ENCODE measurements at regions of chr10 and their contacts with region 1.

Region 1: GRCh38 chr10:103966671-103967447 is at the start of gene SLK:
- DNase-seq: peak; percentile 53
- ATAC-seq: peak; percentile 87
- H3K4me3 ChIP-seq: peak within 1 kb of the TSS; percentile 83 to 93 (median 88)
- H3K27ac ChIP-seq: peak within 1 kb of the TSS; percentile 85
- H3K4me1 ChIP-seq: peaks cover 35% of the 10 kb centered on the region
- H3K27me3 ChIP-seq: peaks cover 0 to 3% of the 10 kb centered on the region in 2 experiments; a peak in 1 of 5 replicates
- CTCF ChIP-seq: no peak
- EP300 ChIP-seq: no peak
- POLR2A ChIP-seq: peak; percentile 44 to 85; a peak in 3 of 4 replicates
- RAD21 ChIP-seq: no peak; the same call in 1 of the 2 replicates
- total RNA-seq, gene SLK: 22.8 and 35.0 TPM in 2 replicates

Region 2: DNA sequence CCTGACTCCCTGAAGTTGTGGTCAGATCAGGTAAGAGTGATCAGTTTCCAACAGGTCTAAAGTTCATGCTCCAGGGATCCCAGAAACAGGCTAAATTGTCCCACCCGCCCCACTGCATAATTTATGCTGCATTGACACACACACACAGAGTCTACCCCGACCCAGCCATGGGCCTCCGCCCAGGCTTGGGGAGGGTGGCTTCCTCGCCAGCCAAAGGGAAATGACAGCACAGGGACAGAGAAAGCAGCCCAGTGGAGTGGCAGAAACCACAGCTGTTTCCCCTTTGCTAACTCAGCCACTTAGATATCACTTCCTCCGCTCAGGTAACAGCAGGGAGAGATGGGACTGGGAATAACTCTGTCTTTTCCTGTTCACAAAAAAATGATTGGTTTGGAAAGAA is 120.9 kb before region 1 on chr10:
- CTCF ChIA-PET with region 1: no interaction called
- POLR2A ChIA-PET with region 1: no interaction called
- in situ Hi-C with region 1: no loop called
- intact Hi-C with region 1: no loop called
- DNase-seq: no peak
- ATAC-seq: peak; percentile 13; the same call in 1 of the 3 replicates
- H3K4me3 ChIP-seq: no peak overlapping the region
- H3K27ac ChIP-seq: no peak overlapping the region
- H3K4me1 ChIP-seq: peaks cover 90% of the 10 kb centered on the region
- H3K27me3 ChIP-seq: no peaks in the 10 kb centered on the region
- CTCF ChIP-seq: no peak
- EP300 ChIP-seq: no peak
- POLR2A ChIP-seq: no peak
- RAD21 ChIP-seq: no peak

Region 3: DNA sequence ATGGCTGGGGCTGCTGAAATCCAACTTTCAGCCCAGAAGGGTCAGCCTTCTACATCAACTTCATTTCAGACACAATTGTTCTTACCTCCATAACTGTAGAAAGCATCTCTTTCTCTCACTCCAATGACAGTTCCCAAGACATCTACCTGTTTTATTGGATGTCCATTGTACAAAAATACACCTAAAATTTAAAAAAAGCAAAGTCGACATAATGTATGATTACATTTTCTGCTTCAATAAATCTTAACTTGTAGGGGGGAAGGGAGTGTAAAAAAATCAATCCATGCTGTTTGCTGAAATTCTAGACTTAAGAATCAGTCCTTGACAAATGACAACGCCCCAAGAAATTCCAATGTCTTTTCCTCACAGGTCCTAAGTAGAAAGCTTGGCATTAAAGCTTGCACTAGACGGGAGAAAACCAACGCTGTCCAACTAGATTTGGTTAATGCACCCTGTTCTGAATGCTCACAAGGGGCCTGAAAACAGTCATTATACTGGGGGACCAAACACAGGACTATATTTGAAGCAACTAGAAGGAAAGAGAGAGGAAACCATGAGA is 56.3 kb before region 1 on chr10:
- CTCF ChIA-PET with region 1: no interaction called
- POLR2A ChIA-PET with region 1: interaction called, 3 read pairs
- in situ Hi-C with region 1: no loop called
- intact Hi-C with region 1: loop called (anchors 1 kb)
- DNase-seq: no peak
- ATAC-seq: no peak
- H3K4me3 ChIP-seq: no peak overlapping the region
- H3K27ac ChIP-seq: no peak overlapping the region
- H3K4me1 ChIP-seq: peaks cover 17% of the 10 kb centered on the region
- H3K27me3 ChIP-seq: no peaks in the 10 kb centered on the region
- CTCF ChIP-seq: no peak
- EP300 ChIP-seq: no peak
- POLR2A ChIP-seq: no peak
- RAD21 ChIP-seq: no peak

Region 4: DNA sequence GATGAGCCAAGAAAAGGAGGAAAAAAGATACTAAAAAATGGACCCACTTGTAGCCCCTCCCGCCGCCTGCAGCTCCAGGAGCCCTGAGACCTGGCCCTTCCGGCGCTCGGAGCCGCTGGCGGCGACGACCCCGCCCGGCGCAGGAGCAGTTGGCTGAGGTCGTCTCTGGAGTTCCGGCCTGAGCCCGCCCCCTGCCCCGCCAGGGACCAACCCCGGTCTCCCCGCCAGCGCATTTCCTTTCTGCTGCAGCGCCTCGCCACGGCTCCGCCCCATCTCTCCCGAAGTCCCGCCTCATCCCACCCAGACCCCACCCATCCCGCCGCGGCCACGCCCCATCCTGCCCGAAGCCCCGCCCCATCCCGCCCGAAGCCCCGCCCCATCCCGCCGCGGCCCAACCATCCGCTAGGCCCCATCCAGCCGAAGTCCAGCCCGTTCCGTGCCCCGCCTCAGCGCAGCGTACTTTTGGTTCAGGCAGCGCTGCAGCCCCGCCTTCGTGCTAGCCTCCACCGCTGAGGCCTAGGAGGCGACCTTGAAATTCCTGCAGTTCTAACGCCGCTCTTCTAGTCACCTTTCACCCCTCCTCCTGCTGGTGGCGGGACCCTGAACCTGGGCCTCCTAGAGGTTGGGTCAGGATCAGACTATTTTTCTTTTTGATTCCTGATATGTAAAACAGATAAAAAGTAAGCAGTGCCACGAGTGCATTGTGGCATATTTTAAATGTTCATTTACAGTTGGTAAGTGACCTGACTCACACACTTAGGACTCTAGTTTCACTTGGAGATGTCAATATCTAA is 48.6 kb before region 1 on chr10 and contains the start of gene STN1:
- CTCF ChIA-PET with region 1: no interaction called
- POLR2A ChIA-PET with region 1: no interaction called
- in situ Hi-C with region 1: no loop called
- intact Hi-C with region 1: loop called (anchors 2 kb)
- DNase-seq: peak; percentile 95
- ATAC-seq: peak; percentile 97
- H3K4me3 ChIP-seq: peak within 1 kb of the TSS; percentile 78 to 95 (median 85)
- H3K27ac ChIP-seq: peak within 1 kb of the TSS; percentile 90
- H3K4me1 ChIP-seq: peaks cover 62% of the 10 kb centered on the region
- H3K27me3 ChIP-seq: no peaks in the 10 kb centered on the region; a peak in 1 of 5 replicates
- CTCF ChIP-seq: peak; percentile 47
- EP300 ChIP-seq: peak in 1 of 2 experiments; percentile 94; a peak in 3 of 4 replicates
- POLR2A ChIP-seq: peak; percentile 83 to 95
- RAD21 ChIP-seq: 0 out of 2 replicates have a peak, but pooled peaks have one; percentile 24
- total RNA-seq, gene STN1: 22.7 and 27.7 TPM in 2 replicates

Region 5: DNA sequence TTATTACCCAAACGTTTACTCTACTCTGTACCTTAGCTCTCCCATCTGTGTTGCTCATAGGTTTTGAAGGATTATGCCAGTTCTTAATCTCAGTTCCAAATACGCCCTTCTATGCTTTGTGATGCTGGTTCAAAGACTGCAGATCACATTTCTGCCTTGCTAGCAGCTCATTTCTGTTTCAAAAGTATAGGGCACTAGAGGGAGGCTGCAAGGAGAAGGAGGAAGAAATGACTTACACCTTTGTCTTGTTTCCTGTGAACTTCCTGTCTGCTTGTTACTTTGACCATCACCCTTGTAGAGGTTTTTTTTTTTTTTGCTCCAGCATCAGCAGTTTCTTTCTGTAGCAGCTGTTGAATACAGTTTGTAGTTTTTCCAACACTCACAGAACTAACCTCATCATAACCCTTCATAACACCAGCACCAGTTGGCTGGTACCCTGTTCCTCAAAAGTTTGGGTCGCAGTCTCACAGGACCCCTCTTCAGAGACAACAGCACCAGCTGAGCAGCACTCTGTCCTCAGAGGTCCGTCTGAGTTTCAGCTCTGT is 16.6 kb after region 1 on chr10:
- CTCF ChIA-PET with region 1: no interaction called
- POLR2A ChIA-PET with region 1: no interaction called
- in situ Hi-C with region 1: no loop called
- intact Hi-C with region 1: no loop called
- DNase-seq: no peak
- ATAC-seq: peak; percentile 50; the same call in 1 of the 3 replicates
- H3K4me3 ChIP-seq: no peak overlapping the region
- H3K27ac ChIP-seq: peak overlapping the region; percentile 4
- H3K4me1 ChIP-seq: peaks cover 13% of the 10 kb centered on the region
- H3K27me3 ChIP-seq: no peaks in the 10 kb centered on the region
- CTCF ChIP-seq: no peak
- EP300 ChIP-seq: no peak
- POLR2A ChIP-seq: no peak
- RAD21 ChIP-seq: no peak

Region 6: DNA sequence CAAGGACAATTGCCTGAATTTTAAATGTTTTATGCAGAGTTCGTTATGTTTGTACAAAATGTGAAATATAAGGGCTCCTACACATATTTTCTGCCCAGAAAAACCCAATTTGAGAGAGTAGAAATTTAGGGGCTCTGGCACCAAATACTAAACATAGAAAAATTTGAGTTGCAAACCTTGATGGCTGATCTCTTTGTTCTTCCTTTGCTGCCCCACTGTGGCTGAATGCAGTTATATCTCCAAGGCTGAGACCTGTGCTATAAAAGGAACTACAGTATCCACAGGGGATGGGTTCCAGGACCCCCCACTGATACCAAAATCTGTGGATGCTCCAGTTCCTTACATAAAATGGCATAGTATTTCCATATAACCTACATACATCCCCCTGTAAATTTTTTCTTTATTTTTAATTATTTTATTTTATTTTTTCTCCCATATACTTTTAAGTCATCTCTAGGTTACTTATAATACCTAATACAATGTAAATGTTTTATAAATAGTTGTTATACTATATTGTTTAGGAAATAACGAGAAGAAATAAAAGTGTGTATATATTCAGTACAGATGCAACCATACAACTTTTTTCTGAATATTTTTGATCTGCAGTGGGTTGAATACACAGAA is 242.8 kb after region 1 on chr10:
- CTCF ChIA-PET with region 1: no interaction called
- POLR2A ChIA-PET with region 1: no interaction called
- in situ Hi-C with region 1: no loop called
- intact Hi-C with region 1: no loop called
- DNase-seq: peak; percentile 27
- ATAC-seq: peak; percentile 77
- H3K4me3 ChIP-seq: no peak overlapping the region
- H3K27ac ChIP-seq: no peak overlapping the region
- H3K4me1 ChIP-seq: no peaks in the 10 kb centered on the region
- H3K27me3 ChIP-seq: no peaks in the 10 kb centered on the region
- CTCF ChIP-seq: peak; percentile 66
- EP300 ChIP-seq: no peak
- POLR2A ChIP-seq: no peak
- RAD21 ChIP-seq: 0 out of 2 replicates have a peak, but pooled peaks have one; percentile 36

Region 7: GRCh38 chr10:104231784-104232612 is 265.1 kb after region 1 on chr10 and contains the start of gene CFAP43:
- CTCF ChIA-PET with region 1: no interaction called
- POLR2A ChIA-PET with region 1: no interaction called
- in situ Hi-C with region 1: no loop called
- intact Hi-C with region 1: no loop called
- DNase-seq: peak; percentile 93
- ATAC-seq: peak; percentile 100
- H3K4me3 ChIP-seq: peak within 1 kb of the TSS; percentile 79 to 93 (median 86)
- H3K27ac ChIP-seq: peak within 1 kb of the TSS; percentile 82
- H3K4me1 ChIP-seq: peaks cover 21% of the 10 kb centered on the region
- H3K27me3 ChIP-seq: no peaks in the 10 kb centered on the region; a peak in 1 of 5 replicates
- CTCF ChIP-seq: no peak; the same call in 1 of the 2 replicates
- EP300 ChIP-seq: no peak
- POLR2A ChIP-seq: peak; percentile 49 to 61; a peak in 3 of 4 replicates
- RAD21 ChIP-seq: peak; percentile 30; the same call in 1 of the 2 replicates
- total RNA-seq, gene CFAP43: 0.24 and 0.46 TPM in 2 replicates

Measured in HepG2 (cell line).